Esophagus muscularis mucosa (tissue), 4 donors: ENCODE measurements at regions of chr13 and their contacts with region 1.

Region 1: GRCh38 chr13:75876360-75877050 is 240.4 kb downstream of the LMO7 start:
- DNase-seq: no peak
- H3K4me3 ChIP-seq: no peak overlapping the region
- H3K27ac ChIP-seq: no peak overlapping the region
- H3K4me1 ChIP-seq: peaks cover 0 to 18% (median 16%) of the 10 kb centered on the region in 4 donors
- H3K27me3 ChIP-seq: no peaks in the 10 kb centered on the region
- CTCF ChIP-seq: peak; percentile 84 to 96 (median 88)
- EP300 ChIP-seq: no peak
- POLR2A ChIP-seq: no peak

Region 2: DNA sequence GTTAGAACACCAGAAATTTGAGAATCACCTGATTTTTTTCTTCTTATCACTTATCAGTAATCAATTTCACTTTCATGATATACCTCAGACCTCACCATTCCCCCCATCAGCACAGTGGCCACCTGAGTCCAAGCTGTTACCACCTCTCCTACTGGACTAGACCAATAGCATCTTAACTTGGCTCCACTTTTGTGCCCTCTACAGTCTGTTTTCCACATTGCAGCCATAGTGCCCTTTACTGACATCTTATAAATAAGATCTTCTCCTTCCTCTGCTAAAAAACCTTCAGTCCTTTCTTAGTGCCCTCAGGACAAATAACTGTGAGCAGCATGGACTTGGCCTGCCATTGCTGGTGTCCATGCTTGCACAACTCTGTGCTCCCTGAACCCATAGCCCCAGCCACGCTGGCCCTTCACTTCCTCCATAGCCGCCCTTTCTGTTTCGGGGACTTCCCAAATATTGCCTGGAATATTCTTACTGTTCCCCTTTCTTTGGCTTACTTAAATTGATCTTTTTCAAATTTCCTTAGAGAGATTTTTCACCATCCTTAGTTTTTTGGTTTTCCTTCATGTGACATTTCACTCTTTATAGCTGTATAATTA is 140.4 kb after region 1 on chr13:
- intact Hi-C with region 1: loop called (anchors 2 kb)
- DNase-seq: no peak
- H3K4me3 ChIP-seq: no peak overlapping the region
- H3K27ac ChIP-seq: no peak overlapping the region
- H3K4me1 ChIP-seq: peaks cover 13 to 28% (median 19%) of the 10 kb centered on the region in 4 donors
- H3K27me3 ChIP-seq: no peaks in the 10 kb centered on the region
- CTCF ChIP-seq: peak in 2 of 3 experiments; percentile 18 to 36
- EP300 ChIP-seq: no peak
- POLR2A ChIP-seq: no peak

Region 3: DNA sequence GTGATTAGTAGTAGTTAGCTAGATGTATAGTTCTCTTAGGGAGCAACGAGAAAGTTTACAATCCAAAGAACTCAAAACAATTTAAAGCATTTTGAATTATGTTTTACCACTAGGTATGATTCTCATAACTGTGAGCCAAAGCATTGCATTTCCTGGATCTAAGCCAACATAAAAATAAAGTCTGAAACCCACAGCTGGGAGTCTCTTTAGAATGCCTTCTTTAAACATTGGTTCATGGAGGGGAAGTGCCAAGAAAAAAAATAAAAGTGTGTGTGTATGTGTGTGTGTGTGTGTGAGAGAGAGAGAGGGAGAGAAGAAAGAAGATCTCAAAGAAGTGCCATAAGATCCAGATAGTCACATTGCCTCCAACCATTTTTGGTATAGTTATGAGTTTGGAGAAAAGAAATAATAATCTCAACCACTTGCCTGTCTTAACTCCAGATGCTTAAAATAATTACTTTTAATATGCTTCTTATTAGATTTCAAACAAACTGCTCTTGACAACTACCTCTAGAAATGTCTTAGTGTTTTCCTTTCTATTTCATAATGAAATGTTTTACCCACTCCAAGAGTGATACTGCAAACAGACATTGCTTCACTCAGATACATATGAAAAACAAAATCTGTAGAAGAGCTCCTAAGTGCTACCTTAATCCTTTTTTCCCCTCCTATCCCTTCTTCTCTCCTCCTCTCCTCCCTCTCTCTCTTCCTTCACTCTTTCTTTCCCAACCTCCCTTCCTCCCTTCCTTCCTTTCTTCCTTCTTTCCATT is 455.6 kb after region 1 on chr13:
- intact Hi-C with region 1: loop called (anchors 10 kb)
- DNase-seq: no peak
- H3K4me3 ChIP-seq: no peak overlapping the region
- H3K27ac ChIP-seq: peak overlapping the region; percentile 44 to 75 (median 56)
- H3K4me1 ChIP-seq: peaks cover 4 to 72% (median 69%) of the 10 kb centered on the region in 4 donors
- H3K27me3 ChIP-seq: no peaks in the 10 kb centered on the region
- CTCF ChIP-seq: no peak
- EP300 ChIP-seq: no peak
- POLR2A ChIP-seq: no peak

Region 4: DNA sequence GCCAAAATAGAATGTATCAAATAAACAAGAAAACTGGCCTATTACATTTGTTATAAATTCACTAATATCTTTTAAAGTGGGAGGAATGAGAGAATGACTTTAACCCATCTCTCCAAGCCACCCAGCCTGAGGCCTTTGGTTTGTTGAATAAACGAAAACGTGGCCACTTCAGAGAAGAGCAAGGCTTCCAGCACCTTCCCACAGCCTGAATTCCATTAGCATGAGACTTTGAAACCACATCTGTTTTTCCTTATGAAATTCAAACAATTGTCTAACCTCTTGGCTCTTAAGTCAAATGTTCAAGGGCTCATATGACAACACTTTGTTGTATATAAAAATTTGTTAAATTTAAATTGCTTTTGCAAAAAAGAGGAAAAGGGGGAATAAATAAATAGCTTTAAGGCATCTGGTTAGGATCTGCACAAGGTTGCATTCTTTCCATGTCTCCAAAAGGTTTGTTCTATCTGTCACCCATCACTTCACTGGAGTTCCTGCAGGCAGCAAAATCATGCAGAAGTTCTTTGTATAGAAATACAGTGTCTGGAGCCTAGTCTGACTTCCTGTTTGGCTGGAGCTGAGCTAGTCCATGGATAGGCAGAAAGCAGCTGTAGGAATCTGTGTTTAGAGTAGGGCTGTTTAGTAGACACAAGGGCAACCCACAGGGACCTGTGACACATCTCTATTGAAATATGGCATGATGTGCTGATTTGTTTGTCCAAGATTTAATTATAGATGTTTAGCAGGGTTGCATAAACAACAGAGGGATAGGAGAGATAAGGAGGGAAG is 507.4 kb after region 1 on chr13:
- intact Hi-C with region 1: loop called (anchors 10 kb)
- DNase-seq: no peak
- H3K4me3 ChIP-seq: no peak overlapping the region
- H3K27ac ChIP-seq: peak overlapping the region; percentile 41 to 76 (median 66)
- H3K4me1 ChIP-seq: peaks cover 5 to 49% (median 46%) of the 10 kb centered on the region in 4 donors
- H3K27me3 ChIP-seq: no peaks in the 10 kb centered on the region
- CTCF ChIP-seq: no peak
- EP300 ChIP-seq: no peak
- POLR2A ChIP-seq: no peak

Region 5: DNA sequence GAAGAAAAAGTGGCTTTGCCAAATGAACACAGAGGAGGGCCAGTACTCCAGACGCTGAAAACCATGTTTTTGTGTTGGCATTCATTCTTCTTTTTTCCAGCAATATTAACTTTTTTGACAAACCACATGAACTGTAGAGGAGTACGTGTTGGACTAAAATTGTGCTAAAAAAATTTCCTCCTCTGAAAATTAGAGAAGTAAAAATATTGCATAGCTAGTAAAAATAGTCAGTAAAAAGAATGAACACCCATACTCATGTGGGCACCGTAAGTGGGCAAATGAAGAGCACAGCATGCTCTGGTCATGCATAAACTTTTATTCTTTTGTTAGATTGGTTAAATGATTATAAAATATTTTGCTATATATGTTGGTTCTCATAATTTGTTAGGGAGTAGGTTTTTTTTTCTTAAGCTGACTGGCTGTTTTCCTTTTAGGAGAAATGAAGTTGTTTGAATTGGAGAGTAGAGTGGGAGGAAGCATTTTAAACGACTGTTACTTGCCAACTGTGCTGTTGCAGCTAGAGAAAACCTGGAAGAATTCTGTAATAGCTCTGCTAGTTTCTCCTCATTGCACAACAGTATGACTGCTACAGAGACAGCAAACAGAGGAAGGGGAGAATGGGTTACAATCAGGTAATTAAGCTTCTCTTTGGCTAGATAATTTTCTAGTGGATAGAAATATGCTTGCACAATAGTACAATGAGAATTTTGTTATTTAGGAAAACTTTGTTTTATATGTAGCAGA is 787.3 kb after region 1 on chr13:
- intact Hi-C with region 1: no loop called
- DNase-seq: no peak
- H3K4me3 ChIP-seq: no peak overlapping the region
- H3K27ac ChIP-seq: peak overlapping the region in 1 of 4 donors; percentile 15
- H3K4me1 ChIP-seq: peaks cover 0 to 24% (median 11%) of the 10 kb centered on the region in 4 donors
- H3K27me3 ChIP-seq: no peaks in the 10 kb centered on the region
- CTCF ChIP-seq: no peak
- EP300 ChIP-seq: no peak
- POLR2A ChIP-seq: no peak